T-cell (primary cell): ENCODE measurements at regions of chr14 and their contacts with region 1.

Region 1: GRCh38 chr14:94036313-94037050 is 10.3 kb downstream of the OTUB2 start:
- DNase-seq: peak; percentile 32 to 85 (median 67)
- ATAC-seq: peak; percentile 70 to 92 (median 86)
- H3K4me3 ChIP-seq: no peak overlapping the region
- H3K4me3 Mint-ChIP-seq: no peak overlapping the region
- H3K27ac ChIP-seq: no peak overlapping the region
- H3K27ac Mint-ChIP-seq: no peak overlapping the region
- H3K4me1 ChIP-seq: peaks cover 0 to 5% of the 10 kb centered on the region in 2 experiments
- H3K4me1 Mint-ChIP-seq: peaks cover 3 to 12% (median 4%) of the 10 kb centered on the region in 3 donors
- H3K27me3 ChIP-seq: peaks cover 0 to 5% of the 10 kb centered on the region in 2 experiments
- H3K27me3 Mint-ChIP-seq: no peaks in the 10 kb centered on the region

Region 2: GRCh38 chr14:93994919-93995682 is 41.4 kb before region 1 on chr14:
- CTCF ChIA-PET with region 1: no interaction called
- POLR2A ChIA-PET with region 1: no interaction called
- DNase-seq: no peak
- ATAC-seq: peak in 3 of 4 experiments; percentile 50 to 68 (median 55)
- H3K4me3 ChIP-seq: no peak overlapping the region
- H3K4me3 Mint-ChIP-seq: no peak overlapping the region
- H3K27ac ChIP-seq: no peak overlapping the region
- H3K27ac Mint-ChIP-seq: no peak overlapping the region
- H3K4me1 ChIP-seq: no peaks in the 10 kb centered on the region
- H3K4me1 Mint-ChIP-seq: peaks cover 0 to 7% (median 0%) of the 10 kb centered on the region in 3 donors
- H3K27me3 ChIP-seq: peaks cover 0 to 44% of the 10 kb centered on the region in 2 experiments
- H3K27me3 Mint-ChIP-seq: peaks cover 0 to 8% of the 10 kb centered on the region in 2 donors

Region 3: DNA sequence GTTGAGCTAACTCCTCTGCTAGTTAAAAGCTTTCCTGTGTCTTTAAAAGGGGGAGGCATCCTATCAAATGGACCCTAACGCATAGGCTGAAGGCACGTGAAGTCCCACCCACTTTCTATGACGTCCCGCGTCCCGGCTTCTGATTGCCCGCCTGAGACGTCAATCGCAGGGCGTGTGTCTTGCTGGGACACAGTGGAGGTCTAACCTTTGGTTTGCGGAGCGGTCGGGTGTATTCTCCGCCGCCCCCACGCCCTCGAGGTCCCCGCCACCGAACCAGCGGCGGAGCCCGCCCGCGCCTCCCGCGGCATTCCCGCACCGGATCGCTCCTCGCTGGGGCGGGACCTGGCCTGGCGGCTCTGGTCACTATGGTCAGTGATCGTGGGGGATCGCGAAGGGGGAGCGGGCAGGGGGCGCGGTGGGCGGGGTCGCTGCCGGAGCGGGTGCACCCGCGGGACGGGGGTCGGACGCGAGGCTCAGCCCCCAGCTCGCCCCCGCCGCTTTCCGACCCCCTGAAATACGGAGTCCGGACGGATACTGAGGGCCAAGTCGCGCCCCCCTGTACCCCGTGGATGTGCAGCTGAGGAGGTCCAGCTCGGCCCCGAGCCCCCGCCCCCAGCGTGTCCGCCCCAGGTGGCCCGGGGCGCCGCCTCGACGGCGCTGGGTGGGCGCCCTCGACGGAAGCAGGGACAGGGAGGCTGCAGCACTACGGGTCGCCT is 10.2 kb before region 1 on chr14 and contains the start of gene OTUB2:
- CTCF ChIA-PET with region 1: interaction called, 6 to 10 read pairs
- POLR2A ChIA-PET with region 1: no interaction called
- DNase-seq: peak; percentile 91 to 99 (median 95)
- ATAC-seq: peak; percentile 99 to 100 (median 99)
- H3K4me3 ChIP-seq: peak within 1 kb of the TSS; percentile 30 to 36
- H3K4me3 Mint-ChIP-seq: peak within 1 kb of the TSS; percentile 73 to 84 (median 76)
- H3K27ac ChIP-seq: no peak within 1 kb of the TSS
- H3K27ac Mint-ChIP-seq: peak within 1 kb of the TSS in 1 of 2 donors; percentile 31
- H3K4me1 ChIP-seq: peaks cover 2 to 46% of the 10 kb centered on the region in 2 experiments
- H3K4me1 Mint-ChIP-seq: peaks cover 42 to 46% (median 44%) of the 10 kb centered on the region in 3 donors
- H3K27me3 ChIP-seq: peaks cover 0 to 11% of the 10 kb centered on the region in 2 experiments
- H3K27me3 Mint-ChIP-seq: peaks cover 0 to 2% of the 10 kb centered on the region in 2 donors
- total RNA-seq, gene OTUB2: 0.09 to 0.57 (median 0.28) TPM

Region 4: GRCh38 chr14:94136575-94137331 is 100.3 kb after region 1 on chr14:
- CTCF ChIA-PET with region 1: interaction called, 15 to 50 read pairs
- POLR2A ChIA-PET with region 1: interaction called in 1 of 2 experiments, 3 read pairs
- DNase-seq: peak; percentile 59 to 88 (median 79)
- ATAC-seq: peak; percentile 89 to 92 (median 90)
- H3K4me3 ChIP-seq: no peak overlapping the region
- H3K4me3 Mint-ChIP-seq: no peak overlapping the region
- H3K27ac ChIP-seq: no peak overlapping the region
- H3K27ac Mint-ChIP-seq: no peak overlapping the region
- H3K4me1 ChIP-seq: peaks cover 0 to 6% of the 10 kb centered on the region in 2 experiments
- H3K4me1 Mint-ChIP-seq: peaks cover 0 to 5% (median 3%) of the 10 kb centered on the region in 3 donors
- H3K27me3 ChIP-seq: peaks cover 0 to 19% of the 10 kb centered on the region in 2 experiments
- H3K27me3 Mint-ChIP-seq: peaks cover 13 to 15% of the 10 kb centered on the region in 2 donors

Region 5: DNA sequence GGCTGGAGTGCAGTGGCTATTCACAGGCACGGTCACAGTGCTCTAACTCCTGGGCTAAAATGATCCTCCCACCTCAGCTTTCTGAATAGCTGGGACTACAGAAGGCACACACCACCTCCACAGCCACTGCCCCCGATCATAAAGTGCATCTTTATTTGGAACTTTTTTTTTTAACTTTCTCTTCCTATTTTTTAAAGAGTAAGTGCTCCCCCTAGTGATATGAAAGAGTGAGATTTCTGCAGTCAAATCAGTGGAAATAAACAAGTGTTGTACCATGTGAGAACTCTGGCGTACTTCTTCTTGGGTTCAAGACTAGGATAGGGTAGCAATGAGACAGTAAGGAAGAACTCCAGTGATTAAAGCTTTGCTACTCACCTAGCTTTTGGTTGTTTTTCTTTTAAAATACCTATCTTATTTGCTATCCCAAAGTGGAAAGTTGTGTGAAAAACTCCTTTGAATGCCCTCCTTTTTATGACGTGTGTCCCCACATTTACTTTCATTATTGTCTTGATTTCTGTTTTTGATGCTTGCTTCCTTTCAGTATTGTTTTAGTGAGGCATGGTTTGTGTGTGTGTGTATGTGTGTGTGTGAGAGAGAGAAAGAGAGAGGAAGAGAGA is 144.3 kb after region 1 on chr14:
- CTCF ChIA-PET with region 1: interaction called, 7 to 33 read pairs
- POLR2A ChIA-PET with region 1: no interaction called
- DNase-seq: peak in 3 of 35 experiments; percentile 5 to 71 (median 29)
- ATAC-seq: peak; percentile 67 to 83 (median 76)
- H3K4me3 ChIP-seq: peak overlapping the region in 1 of 2 donors; percentile 40
- H3K4me3 Mint-ChIP-seq: peak overlapping the region; percentile 46 to 57 (median 55)
- H3K27ac ChIP-seq: peak overlapping the region; percentile 65
- H3K27ac Mint-ChIP-seq: peak overlapping the region; percentile 75 to 79
- H3K4me1 ChIP-seq: peaks cover 0 to 3% of the 10 kb centered on the region in 2 experiments
- H3K4me1 Mint-ChIP-seq: peaks cover 16 to 19% (median 17%) of the 10 kb centered on the region in 3 donors
- H3K27me3 ChIP-seq: peaks cover 3 to 15% of the 10 kb centered on the region in 2 experiments
- H3K27me3 Mint-ChIP-seq: peaks cover 0 to 6% of the 10 kb centered on the region in 2 donors